CD4-positive, alpha-beta memory T cell (primary cell): ENCODE measurements at regions of chr5 and their contacts with region 1.

Region 1: DNA sequence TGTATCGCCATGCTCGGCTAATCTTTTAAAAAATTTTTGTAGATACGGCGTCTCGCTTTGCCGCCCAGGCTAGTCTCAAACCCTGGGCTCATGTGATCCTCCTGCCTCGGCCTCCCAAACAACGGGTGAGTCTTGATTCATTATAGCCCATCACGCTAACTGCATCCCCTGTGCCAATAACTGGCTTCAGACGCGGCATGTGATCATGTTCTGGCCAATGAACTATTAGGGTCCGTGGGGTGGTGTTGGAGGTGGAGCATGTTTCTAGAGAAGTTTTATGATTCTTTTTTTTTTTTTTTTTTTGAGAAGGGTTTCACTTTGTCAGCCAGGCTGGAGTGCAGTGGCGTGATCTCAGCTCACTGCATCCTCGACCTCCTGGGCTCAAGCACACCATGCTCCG is 51.0 kb downstream of the FGF18 start:
- DNase-seq: no peak
- H3K4me3 ChIP-seq: no peak overlapping the region
- H3K4me3 Mint-ChIP-seq: no peak overlapping the region
- H3K27ac ChIP-seq: no peak overlapping the region
- H3K27ac Mint-ChIP-seq: no peak overlapping the region
- H3K4me1 ChIP-seq: no peaks in the 10 kb centered on the region
- H3K4me1 Mint-ChIP-seq: no peaks in the 10 kb centered on the region
- H3K27me3 ChIP-seq: no peaks in the 10 kb centered on the region
- H3K27me3 Mint-ChIP-seq: peaks cover 5 to 9% of the 10 kb centered on the region in 2 donors

Region 2: GRCh38 chr5:171450423-171451331 is 19.7 kb before region 1 on chr5:
- CTCF ChIA-PET with region 1: no interaction called
- POLR2A ChIA-PET with region 1: no interaction called
- intact Hi-C with region 1: no loop called
- DNase-seq: no peak
- H3K4me3 ChIP-seq: no peak overlapping the region
- H3K4me3 Mint-ChIP-seq: peak overlapping the region in 1 of 8 donors; percentile 52
- H3K27ac ChIP-seq: no peak overlapping the region
- H3K27ac Mint-ChIP-seq: no peak overlapping the region
- H3K4me1 ChIP-seq: no peaks in the 10 kb centered on the region
- H3K4me1 Mint-ChIP-seq: peaks cover 3 to 11% (median 4%) of the 10 kb centered on the region in 4 donors
- H3K27me3 ChIP-seq: peaks cover 5% of the 10 kb centered on the region
- H3K27me3 Mint-ChIP-seq: peaks cover 28 to 43% of the 10 kb centered on the region in 2 donors

Region 3: GRCh38 chr5:171484460-171484899 is 14.1 kb after region 1 on chr5:
- CTCF ChIA-PET with region 1: interaction called, 21 read pairs
- POLR2A ChIA-PET with region 1: no interaction called
- intact Hi-C with region 1: no loop called
- DNase-seq: peak in 3 of 5 donors; percentile 14 to 37 (median 22)
- H3K4me3 ChIP-seq: no peak overlapping the region
- H3K4me3 Mint-ChIP-seq: no peak overlapping the region
- H3K27ac ChIP-seq: no peak overlapping the region
- H3K27ac Mint-ChIP-seq: no peak overlapping the region
- H3K4me1 ChIP-seq: peaks cover 4% of the 10 kb centered on the region
- H3K4me1 Mint-ChIP-seq: peaks cover 0 to 7% (median 2%) of the 10 kb centered on the region in 4 donors
- H3K27me3 ChIP-seq: no peaks in the 10 kb centered on the region
- H3K27me3 Mint-ChIP-seq: peaks cover 2 to 13% of the 10 kb centered on the region in 2 donors

Region 4: DNA sequence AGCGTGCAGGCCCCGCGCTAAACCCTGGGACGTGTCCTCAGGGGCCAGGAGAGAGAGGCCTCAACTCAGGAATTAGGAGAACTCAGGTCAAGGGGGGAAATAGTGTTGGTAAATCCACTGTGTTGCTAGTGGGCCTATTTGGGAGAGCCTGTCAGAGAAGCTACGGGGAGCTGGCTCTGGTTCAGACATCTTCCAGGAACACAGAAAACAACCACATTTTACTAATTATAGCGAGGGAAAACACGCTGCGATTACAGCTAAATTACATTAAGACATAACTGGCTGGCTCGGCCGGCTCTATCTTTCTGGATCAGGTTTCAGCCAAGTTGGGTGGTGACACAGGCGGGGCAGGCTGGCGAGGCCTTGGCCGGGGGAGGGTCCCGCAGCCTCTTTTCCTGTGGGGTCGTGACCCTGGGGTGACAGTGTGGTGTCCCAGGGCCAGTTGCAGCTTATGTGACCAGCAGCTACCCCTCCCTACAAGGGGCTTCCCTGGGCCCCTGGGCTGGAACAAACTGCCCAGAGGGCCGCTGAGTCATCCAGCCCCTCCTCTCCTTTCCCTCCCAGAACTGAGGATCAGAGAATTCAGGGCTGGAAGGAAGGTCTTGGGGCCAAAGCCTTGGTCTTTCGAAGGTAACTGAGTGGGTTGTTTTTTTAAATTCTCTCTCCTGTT is 24.2 kb after region 1 on chr5:
- CTCF ChIA-PET with region 1: no interaction called
- POLR2A ChIA-PET with region 1: no interaction called
- intact Hi-C with region 1: no loop called
- DNase-seq: no peak
- H3K4me3 ChIP-seq: no peak overlapping the region
- H3K4me3 Mint-ChIP-seq: no peak overlapping the region
- H3K27ac ChIP-seq: no peak overlapping the region
- H3K27ac Mint-ChIP-seq: no peak overlapping the region
- H3K4me1 ChIP-seq: no peaks in the 10 kb centered on the region
- H3K4me1 Mint-ChIP-seq: no peaks in the 10 kb centered on the region
- H3K27me3 ChIP-seq: no peaks in the 10 kb centered on the region
- H3K27me3 Mint-ChIP-seq: peaks cover 0 to 7% of the 10 kb centered on the region in 2 donors

Region 5: GRCh38 chr5:173094012-173094661 is 1623.7 kb after region 1 on chr5:
- CTCF ChIA-PET with region 1: no interaction called
- POLR2A ChIA-PET with region 1: no interaction called
- intact Hi-C with region 1: no loop called
- DNase-seq: no peak
- H3K4me3 ChIP-seq: no peak overlapping the region
- H3K4me3 Mint-ChIP-seq: no peak overlapping the region
- H3K27ac ChIP-seq: no peak overlapping the region
- H3K27ac Mint-ChIP-seq: peak overlapping the region in 3 of 7 donors; percentile 24 to 48 (median 29)
- H3K4me1 ChIP-seq: peaks cover 12% of the 10 kb centered on the region
- H3K4me1 Mint-ChIP-seq: peaks cover 34 to 58% (median 48%) of the 10 kb centered on the region in 4 donors
- H3K27me3 ChIP-seq: no peaks in the 10 kb centered on the region
- H3K27me3 Mint-ChIP-seq: no peaks in the 10 kb centered on the region